Posterior vena cava (tissue), 2 donors: ENCODE measurements at regions of chr11 and their contacts with region 1.

Region 1: GRCh38 chr11:76436020-76436419 is 8.8 kb upstream of the EMSY start:
- DNase-seq: no peak

Region 2: GRCh38 chr11:76380967-76381719 is 54.9 kb before region 1 on chr11 and contains the starts of genes GVQW3 and THAP12:
- intact Hi-C with region 1: loop called in 1 of 2 experiments (anchors 10 kb)
- DNase-seq: peak; percentile 99
- total RNA-seq, gene GVQW3: 1.2 to 1.9 TPM
- total RNA-seq, gene THAP12: 37.7 to 39.0 TPM

Region 3: DNA sequence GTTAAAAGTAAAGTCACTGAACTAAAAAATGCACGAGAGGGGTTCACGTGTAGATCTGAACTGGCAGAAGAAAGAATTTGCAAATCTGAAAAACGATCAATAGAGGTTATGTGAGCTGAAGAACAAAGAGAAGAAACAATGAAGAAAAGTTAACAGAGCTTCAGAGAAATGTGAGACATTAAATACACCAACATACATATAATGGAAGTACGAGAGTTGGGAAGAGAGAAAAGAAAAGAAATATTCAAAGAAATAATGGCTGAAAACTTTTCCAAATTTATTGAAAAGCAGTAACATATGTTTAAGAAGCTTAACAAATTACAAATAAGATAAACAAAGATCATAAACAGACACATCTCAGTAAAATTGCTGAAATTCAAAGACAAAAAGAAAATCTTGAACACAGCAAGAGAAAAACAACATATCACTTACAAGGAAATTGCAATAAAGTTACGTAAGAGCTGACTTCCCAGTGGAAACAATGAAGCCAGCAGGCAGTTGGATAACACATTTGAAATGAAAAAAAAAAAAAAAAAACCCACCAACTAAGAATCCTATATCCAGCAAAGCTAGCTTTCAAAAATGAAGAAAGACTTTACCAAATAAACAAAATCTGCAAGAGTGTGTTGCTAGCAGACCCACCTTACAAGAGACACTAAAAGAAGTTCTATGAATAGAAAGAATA is 65.6 kb after region 1 on chr11:
- intact Hi-C with region 1: no loop called
- DNase-seq: no peak